ENCODE measurements at regions of chr1 and their contacts with region 1.

Region 1: GRCh38 chr1:179002552-179003345 is 22.9 kb upstream of the FAM20B start:
- DNase-seq: peak; percentile 32
- H3K4me3 ChIP-seq: no peak overlapping the region
- H3K27ac ChIP-seq: no peak overlapping the region
- H3K27me3 ChIP-seq: no peaks in the 10 kb centered on the region
- CTCF ChIP-seq: peak; percentile 97

Region 2: DNA sequence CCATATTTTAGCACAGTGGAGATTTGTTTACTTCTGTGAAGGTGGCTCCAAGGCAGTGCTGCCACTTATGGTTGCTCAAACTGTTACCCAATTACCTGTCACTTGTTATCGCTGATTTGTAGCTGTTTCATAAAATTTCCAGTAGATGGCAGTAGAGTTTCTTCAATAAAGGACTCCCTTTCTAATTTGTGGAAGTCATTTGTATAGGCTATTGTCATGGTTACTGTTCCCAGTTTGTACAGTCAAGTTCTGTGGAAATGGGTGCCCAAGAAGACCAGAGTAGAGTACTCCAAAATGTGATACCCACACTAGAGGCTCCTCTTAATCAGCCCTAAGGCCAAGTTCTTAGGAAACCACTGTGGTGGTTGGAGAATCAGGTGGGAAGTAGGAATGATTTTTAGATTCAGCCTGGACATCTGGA is 692.1 kb before region 1 on chr1:
- CTCF ChIA-PET with region 1: interaction called, 26 read pairs
- POLR2A ChIA-PET with region 1: no interaction called
- DNase-seq: peak; percentile 21
- H3K4me3 ChIP-seq: no peak overlapping the region
- H3K27ac ChIP-seq: no peak overlapping the region
- H3K27me3 ChIP-seq: no peaks in the 10 kb centered on the region
- CTCF ChIP-seq: peak; percentile 75

Region 3: GRCh38 chr1:178542560-178543356 is 460.0 kb before region 1 on chr1:
- CTCF ChIA-PET with region 1: interaction called, 176 read pairs
- POLR2A ChIA-PET with region 1: interaction called, 4 read pairs
- DNase-seq: peak; percentile 75
- H3K4me3 ChIP-seq: peak overlapping the region; percentile 72
- H3K27ac ChIP-seq: peak overlapping the region; percentile 78
- H3K27me3 ChIP-seq: no peaks in the 10 kb centered on the region
- CTCF ChIP-seq: peak; percentile 79

Region 4: DNA sequence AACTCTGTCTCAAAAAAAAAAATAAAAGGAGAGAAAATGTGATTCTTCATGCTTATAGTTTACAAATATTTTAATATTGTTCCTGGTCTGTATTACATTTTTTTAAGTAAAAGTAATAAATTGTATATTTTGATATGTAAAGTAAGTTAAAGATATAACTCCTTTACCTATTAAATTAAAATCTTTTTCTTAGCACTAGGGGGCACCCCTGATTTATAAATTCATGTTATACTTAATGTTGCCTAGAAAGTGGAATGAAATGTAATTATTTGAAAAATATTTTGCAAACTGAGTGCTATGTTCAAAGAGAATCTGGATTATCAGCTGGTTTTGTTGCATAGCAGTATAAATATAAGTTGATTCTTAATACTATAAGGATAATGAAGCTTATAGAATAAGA is 228.5 kb before region 1 on chr1:
- CTCF ChIA-PET with region 1: interaction called, 36 read pairs
- POLR2A ChIA-PET with region 1: no interaction called
- DNase-seq: no peak
- H3K4me3 ChIP-seq: no peak overlapping the region
- H3K27ac ChIP-seq: no peak overlapping the region
- H3K27me3 ChIP-seq: no peaks in the 10 kb centered on the region
- CTCF ChIP-seq: peak; percentile 32

Region 5: GRCh38 chr1:178870944-178871343 is 131.8 kb before region 1 on chr1 and contains the start of gene ANGPTL1:
- CTCF ChIA-PET with region 1: interaction called, 14 read pairs
- POLR2A ChIA-PET with region 1: no interaction called
- DNase-seq: peak; percentile 39
- H3K4me3 ChIP-seq: peak within 1 kb of the TSS; percentile 3; the same call in 1 of the 2 replicates
- H3K27ac ChIP-seq: no peak within 1 kb of the TSS
- H3K27me3 ChIP-seq: no peaks in the 10 kb centered on the region
- CTCF ChIP-seq: no peak
- polyA plus RNA-seq, gene ANGPTL1: 0.16 and 0.47 TPM in 2 replicates

Region 6: GRCh38 chr1:178938959-178939317 is 63.8 kb before region 1 on chr1:
- CTCF ChIA-PET with region 1: interaction called, 14 read pairs
- POLR2A ChIA-PET with region 1: no interaction called
- DNase-seq: peak; percentile 21
- H3K4me3 ChIP-seq: no peak overlapping the region
- H3K27ac ChIP-seq: peak overlapping the region; percentile 11
- H3K27me3 ChIP-seq: no peaks in the 10 kb centered on the region
- CTCF ChIP-seq: no peak

Measured in AG04450 (cell line).